ENCODE measurements at regions of chr22 and their contacts with region 1.

Region 1: DNA sequence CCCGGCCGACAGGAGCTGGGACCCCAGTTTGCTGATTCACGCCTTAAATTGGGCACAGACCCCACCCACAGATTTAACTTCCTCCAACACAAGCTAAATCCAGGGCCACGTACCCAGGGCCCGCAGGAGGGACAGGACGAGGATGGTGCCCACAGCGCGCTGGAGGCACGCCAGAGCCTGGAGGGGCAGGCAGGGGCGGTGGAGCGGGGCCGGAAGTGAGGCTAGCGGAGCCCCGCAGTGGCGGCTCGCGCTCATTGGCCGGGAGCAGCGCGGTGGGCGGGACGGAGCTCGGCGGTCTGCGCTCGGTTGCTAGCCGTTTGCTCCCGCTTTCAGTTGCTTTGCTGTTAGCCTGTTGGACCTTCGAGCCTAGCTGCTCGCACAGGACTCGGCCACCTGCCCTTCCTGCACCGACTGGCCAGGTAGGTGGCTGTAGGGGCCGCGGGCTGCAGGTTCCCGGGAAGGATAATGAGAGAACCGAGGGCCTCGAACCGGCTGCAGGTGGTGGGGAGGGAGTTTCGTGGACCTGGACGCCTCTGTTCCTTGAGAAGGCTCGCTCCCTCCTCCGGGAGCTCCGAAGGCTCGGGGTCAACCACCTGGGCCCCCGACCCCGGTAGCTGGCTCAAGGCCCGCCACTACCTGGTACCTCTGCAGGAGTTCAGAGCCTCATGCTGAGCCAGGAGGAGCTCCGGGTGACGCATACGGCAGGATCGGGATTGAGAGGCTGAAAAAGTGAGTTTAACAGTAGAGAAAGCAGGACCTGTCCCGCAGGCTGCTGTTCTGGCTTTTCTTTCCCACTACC is at the start of gene CCDC134:
- DNase-seq: peak; percentile 94
- H3K4me3 ChIP-seq: peak within 1 kb of the TSS; percentile 44 to 91 (median 74)
- H3K27ac ChIP-seq: peak within 1 kb of the TSS; percentile 86 to 91 (median 88)
- H3K4me1 ChIP-seq: peaks cover 10 to 23% (median 18%) of the 10 kb centered on the region in 4 donors
- H3K27me3 ChIP-seq: no peaks in the 10 kb centered on the region
- CTCF ChIP-seq: peak in 1 of 5 experiments; percentile 8
- EP300 ChIP-seq: no peak
- POLR2A ChIP-seq: peak; percentile 92
- total RNA-seq, gene CCDC134: 5.9 to 9.8 TPM in 2 of 4 donors, not detected in the others

Region 2: DNA sequence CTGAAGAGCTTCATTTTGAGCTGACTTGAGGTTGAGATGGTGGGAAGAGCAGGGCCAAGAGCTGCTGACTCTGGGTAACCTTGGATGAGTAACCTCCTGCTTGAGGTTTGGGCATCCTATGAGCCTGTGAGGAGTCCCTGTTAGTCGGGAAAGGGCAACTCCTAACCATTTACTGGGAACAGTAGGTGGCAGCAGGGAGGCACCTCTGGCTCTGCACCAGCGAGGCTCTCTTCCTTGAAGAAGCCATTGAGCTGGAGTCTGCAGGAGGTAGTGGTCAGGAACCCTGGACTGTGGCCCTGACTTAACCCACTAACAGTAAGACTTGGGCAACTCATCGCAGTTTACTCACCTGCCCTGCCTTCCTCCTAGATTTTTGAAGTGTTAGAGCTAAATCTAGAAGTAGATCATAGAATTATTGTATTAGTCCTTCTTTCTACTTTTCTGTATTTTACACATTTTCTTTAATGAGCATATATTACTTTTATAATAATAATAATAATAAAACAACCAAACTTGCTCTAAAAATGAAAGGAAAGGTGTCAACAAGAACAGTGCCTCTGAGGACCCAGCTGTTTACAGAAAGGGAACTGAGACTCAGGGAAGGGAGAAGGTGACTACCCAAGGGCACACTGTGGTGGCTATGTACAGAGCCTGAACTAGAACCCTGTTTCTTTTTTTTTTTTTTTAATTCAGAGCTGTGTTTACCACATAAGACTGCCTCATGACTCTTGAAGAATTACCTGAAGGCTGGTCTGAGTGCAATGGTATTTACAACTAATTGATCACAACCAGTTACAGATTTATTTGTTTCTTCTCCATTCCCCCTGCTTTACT is 53.8 kb before region 1 on chr22:
- in situ Hi-C with region 1: no loop called
- intact Hi-C with region 1: loop called (anchors 10 kb)
- DNase-seq: peak; percentile 77
- H3K4me3 ChIP-seq: no peak overlapping the region
- H3K27ac ChIP-seq: no peak overlapping the region
- H3K4me1 ChIP-seq: no peaks in the 10 kb centered on the region
- H3K27me3 ChIP-seq: no peaks in the 10 kb centered on the region
- CTCF ChIP-seq: peak; percentile 62 to 77 (median 71)
- EP300 ChIP-seq: no peak
- POLR2A ChIP-seq: no peak

Region 3: DNA sequence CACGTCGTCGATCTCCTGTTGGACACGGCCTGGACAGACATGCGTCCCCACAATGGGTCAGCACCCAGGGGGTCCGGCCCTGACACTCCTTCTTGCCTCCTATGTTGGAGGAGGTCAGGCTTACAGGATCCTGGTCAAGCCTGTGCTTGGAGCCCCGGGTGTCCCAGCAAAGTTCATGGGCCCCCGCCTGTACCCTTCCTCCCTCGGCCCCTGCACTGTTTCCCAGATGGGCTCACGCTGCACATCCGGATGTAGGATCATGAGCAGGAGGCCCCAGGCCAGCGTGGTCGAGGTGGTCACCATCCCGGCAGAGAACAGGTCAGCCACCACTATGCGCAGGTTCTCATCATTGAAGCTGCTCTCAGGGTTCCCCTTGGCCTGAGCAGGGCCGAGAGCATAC is 327.1 kb after region 1 on chr22:
- in situ Hi-C with region 1: no loop called
- intact Hi-C with region 1: no loop called
- DNase-seq: no peak
- H3K4me3 ChIP-seq: no peak overlapping the region
- H3K27ac ChIP-seq: no peak overlapping the region
- H3K4me1 ChIP-seq: peaks cover 0 to 7% (median 2%) of the 10 kb centered on the region in 4 donors
- H3K27me3 ChIP-seq: no peaks in the 10 kb centered on the region
- CTCF ChIP-seq: no peak
- EP300 ChIP-seq: no peak
- POLR2A ChIP-seq: no peak

Measured in transverse colon (tissue), 4 donors.